OCI-LY7 (cell line): ENCODE measurements at regions of chr4 and their contacts with region 1.

Region 1: DNA sequence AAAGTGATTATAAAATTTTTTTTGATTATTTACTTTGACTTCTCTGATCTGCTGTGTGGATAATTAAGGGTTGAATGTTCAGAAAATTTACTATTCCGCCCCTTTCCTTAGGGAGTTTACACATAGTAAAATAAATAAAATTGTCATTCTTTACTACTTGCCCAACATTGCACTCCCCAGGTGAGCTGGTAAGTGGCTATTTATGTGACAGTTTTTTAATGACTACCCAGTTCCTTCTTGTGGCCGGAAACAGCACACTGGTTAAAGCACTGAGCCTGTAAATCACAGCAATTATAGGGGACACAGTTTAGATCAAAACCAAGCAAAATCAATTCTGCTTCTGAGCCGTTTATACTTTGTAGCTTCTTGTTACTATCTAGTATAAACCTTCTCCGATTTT is 158.1 kb downstream of the FHIP1A start:
- DNase-seq: peak; percentile 77
- H3K4me3 ChIP-seq: peak overlapping the region; percentile 46
- H3K27ac ChIP-seq: peak overlapping the region; percentile 67
- H3K4me1 ChIP-seq: peaks cover 36% of the 10 kb centered on the region
- CTCF ChIP-seq: no peak

Region 2: DNA sequence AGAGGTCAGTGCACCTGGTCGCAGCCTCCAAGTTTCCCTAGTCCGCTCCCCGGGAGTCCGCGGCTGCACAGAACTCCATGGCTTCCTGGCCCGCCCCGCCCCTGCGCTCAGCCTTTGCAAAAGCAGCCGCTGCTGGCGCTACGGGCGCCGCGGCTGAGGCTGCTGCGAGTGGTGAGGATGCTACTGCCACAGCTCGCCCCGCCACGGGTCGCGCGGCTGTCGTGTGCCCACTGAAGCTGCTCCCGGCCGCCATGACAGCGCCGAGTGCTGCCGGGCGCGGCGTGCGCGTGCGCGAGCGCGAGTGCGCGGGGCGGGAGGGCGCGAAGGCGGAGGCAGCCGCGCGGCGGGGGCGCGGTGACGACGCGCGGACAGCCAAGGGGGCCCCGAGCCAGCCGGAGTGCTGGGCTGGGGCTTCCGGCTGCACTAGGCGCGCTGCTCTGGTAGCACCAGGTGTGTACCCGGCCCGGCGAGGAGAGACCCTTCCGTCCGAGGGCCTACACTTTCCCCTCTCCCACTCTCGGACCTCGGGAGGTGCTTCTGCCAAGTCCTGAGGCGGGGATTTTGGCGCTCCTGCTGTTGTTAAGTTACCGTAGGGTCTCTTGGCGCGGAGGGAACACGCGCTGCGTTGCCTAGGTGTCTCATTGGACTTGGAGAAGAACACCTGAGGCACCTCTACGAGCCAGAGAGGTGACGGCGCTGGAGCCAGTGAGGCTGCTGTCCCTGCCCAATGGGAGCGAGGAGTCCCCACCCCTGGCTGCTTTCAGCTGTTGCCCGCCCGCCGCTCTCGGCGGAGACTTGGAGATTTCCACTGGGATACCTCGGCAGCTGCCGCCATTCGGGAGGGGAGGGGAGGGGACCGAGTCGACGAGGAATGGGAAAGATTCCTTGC is 551.4 kb before region 1 on chr4:
- CTCF ChIA-PET with region 1: no interaction called
- POLR2A ChIA-PET with region 1: no interaction called
- intact Hi-C with region 1: loop called (anchors 10 kb)
- DNase-seq: peak; percentile 90
- H3K4me3 ChIP-seq: peak overlapping the region; percentile 95
- H3K27ac ChIP-seq: peak overlapping the region; percentile 88
- H3K4me1 ChIP-seq: peaks cover 18% of the 10 kb centered on the region
- CTCF ChIP-seq: no peak